ENCODE measurements at regions of chr22 and their contacts with region 1.

Region 1: GRCh38 chr22:26330966-26331625 is 98.0 kb upstream of the ASPHD2 start:
- DNase-seq: no peak

Region 2: GRCh38 chr22:26086359-26086758 is 244.7 kb before region 1 on chr22:
- intact Hi-C with region 1: loop called (anchors 2 kb)
- DNase-seq: no peak